GM10248 (cell line): ENCODE measurements at regions of chr14 and their contacts with region 1.

Region 1: GRCh38 chr14:75709207-75709812 is 48.3 kb downstream of the TTLL5 start:
- DNase-seq: peak; percentile 66
- CTCF ChIP-seq: peak; percentile 82

Region 2: DNA sequence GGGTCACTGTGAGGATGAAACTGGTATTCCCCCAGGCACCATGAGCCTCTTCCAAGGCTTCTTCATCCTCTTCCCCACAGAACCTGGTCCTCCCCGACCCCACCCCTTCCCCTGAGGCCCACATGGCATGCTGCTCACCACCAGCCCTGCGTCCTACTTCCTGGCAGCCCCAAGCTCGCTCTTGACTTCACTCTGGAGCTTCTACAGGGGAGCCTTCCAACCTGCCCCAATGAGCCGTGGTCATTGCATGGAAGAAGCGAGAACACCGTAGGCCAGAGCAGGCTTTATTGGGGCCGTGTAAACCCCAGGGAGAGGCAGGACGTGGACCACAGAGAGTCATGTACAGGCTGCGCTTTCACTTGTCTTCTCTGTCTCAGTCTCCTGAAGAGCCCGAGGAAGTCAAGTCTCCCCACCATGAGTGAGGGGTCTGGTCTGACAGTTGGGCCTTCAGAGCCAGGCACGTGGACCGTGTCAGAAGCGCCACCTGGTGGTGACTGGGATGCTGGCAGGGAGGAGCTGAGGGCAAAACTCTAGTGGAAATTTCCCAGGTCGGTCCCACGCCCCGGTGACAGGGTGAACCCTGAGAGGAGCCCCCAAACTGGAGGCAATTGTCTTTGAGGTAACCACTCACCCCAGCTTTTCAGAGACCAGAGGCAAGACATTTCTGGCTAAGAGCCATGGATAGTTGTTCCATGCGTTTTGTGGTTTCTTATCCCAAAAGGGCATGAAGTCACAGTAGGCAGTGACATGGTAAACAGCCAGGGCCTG is 803.8 kb before region 1 on chr14:
- CTCF ChIA-PET with region 1: no interaction called
- POLR2A ChIA-PET with region 1: no interaction called
- DNase-seq: peak; percentile 82
- CTCF ChIP-seq: peak; percentile 88

Region 3: DNA sequence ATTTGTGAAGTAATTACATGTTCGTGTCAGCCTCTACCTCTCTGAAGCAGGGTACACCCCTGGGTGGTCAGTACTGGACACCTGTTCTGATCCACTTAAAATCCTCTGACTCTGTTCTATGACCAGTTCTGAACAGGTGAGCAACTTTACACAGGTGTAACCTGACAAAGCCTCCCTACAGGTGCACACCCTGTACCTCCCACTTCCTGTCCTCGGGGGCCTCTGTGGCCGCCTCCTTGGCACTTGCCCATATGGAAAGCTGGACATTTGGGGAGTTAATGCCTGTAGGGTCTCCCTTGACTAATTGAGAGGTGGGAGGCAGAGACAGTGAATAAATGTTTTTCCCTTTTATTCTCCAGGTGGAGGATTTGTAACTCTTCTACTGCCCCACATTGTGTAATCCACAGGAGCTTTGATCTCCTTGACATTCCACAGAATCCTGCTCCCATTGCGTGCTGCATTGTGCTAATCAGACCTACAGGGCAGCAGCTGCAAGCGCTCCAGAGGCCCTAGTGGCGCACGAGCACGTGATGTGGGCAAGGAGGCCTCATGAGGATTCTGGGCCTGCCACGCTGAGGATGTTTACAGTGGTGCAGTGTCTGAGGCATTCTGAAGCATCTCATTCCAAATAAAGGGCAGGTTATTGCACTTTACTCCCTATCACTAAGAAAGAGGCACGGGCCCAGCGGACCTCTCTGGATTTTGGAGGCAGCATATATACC is 232.9 kb before region 1 on chr14:
- CTCF ChIA-PET with region 1: no interaction called
- POLR2A ChIA-PET with region 1: no interaction called
- DNase-seq: no peak
- CTCF ChIP-seq: no peak

Region 4: GRCh38 chr14:75577729-75578101 is 131.6 kb before region 1 on chr14:
- CTCF ChIA-PET with region 1: interaction called, 18 read pairs
- POLR2A ChIA-PET with region 1: no interaction called
- DNase-seq: peak; percentile 88
- CTCF ChIP-seq: peak; percentile 83

Region 5: DNA sequence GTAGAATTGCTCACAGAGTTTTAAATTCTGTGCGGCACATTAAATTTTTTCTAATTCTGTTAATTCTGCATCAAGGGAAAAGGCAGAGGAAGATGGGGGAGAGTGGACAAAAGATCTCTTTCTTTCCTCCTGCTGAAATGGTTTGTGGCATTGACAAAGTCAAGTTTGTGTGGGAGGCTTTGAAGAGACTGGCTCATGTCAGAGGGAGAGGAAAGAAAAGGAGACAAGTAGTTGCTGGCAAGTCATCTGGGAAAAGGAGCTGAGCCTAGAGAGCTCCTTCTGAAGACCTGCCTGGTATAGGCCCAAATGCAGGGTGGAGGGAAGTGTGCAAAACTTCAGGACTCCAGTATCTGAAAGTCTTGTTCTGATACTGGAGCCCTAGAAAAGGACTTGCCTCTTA is 11.9 kb before region 1 on chr14:
- CTCF ChIA-PET with region 1: interaction called, 16 read pairs
- POLR2A ChIA-PET with region 1: no interaction called
- DNase-seq: no peak
- CTCF ChIP-seq: no peak

Region 6: GRCh38 chr14:75757644-75758402 is 48.5 kb after region 1 on chr14:
- CTCF ChIA-PET with region 1: interaction called, 11 read pairs
- POLR2A ChIA-PET with region 1: no interaction called
- DNase-seq: peak; percentile 14
- CTCF ChIP-seq: no peak

Region 7: DNA sequence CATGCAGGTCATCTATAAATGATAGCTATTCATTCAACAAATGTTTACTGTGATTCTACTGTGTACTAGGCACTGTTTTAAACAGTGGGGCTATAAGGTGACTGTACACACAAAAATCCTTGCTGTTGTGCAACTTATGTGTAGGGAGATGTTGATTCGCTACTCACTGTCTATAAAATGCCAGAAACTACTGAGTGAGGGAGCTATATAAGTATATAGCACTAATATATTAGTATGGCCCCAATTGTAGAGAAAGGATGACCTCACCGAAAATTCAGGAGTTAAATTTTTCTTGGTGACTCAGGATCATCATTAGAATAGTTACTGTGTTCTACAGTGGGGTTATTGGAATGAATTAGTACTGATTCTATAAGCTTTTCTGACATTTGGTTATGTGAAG is 155.0 kb after region 1 on chr14:
- CTCF ChIA-PET with region 1: interaction called, 10 read pairs
- POLR2A ChIA-PET with region 1: no interaction called
- DNase-seq: no peak
- CTCF ChIP-seq: no peak

Region 8: DNA sequence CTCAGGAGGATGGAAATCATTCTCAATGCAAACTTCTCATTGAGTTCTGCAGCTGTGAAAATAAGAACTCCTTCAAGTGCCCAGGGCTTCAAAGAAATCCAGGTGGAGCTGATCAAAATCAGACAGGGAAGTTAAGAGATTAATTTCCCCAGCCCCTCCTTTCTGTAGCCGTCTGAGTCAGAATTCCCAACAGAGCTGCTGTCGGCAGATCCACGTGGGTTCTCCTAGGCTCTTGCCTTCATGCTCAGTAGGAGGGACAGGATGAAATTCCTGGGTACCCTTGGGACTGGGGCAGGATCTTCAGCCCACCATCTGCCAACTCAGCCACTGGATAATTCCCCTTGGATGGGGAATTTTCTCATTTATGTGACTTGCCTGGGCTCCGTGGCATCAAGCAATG is 259.1 kb after region 1 on chr14:
- CTCF ChIA-PET with region 1: interaction called, 12 read pairs
- POLR2A ChIA-PET with region 1: no interaction called
- DNase-seq: no peak
- CTCF ChIP-seq: no peak

Region 9: GRCh38 chr14:76050797-76051392 is 341.6 kb after region 1 on chr14:
- CTCF ChIA-PET with region 1: interaction called, 29 read pairs
- POLR2A ChIA-PET with region 1: no interaction called
- DNase-seq: peak; percentile 57
- CTCF ChIP-seq: peak; percentile 76